Psoas muscle (tissue), 8 donors: ENCODE measurements at regions of chr6 and their contacts with region 1.

Region 1: DNA sequence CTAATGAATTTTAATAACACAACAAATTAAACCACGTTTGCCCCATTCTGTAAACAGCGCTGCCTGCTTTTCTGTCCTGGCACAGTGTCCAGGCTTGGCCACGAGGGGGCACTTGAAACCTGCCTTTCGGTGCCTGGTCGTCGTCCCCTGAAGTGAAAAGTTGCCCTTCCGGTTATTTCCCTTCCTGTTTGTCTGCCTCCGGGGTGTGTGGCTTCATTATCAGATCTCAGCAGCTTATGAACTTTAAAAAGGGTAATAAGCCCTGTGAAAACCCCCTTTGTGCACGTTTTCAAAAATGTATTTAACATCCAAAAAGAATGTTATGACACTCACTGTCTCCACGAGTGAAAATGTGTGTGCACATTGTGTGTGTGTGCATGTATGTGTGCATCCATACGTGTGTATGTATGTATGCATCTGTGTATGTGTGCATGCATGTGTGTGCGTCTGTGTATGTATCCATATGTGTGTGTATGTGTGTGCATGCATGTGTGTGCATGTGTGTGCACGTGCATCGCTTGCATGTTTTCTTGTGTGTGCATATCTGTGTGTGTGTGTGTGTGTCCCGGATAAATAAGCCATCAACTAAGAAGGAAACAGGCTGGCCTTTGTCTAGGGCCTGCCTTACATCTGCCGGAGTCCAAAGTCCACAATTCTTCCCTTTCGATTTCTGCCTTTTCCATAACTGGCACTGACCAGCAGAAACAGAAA is 358.4 kb downstream of the THBS2 start:
- DNase-seq: peak; percentile 77 to 87
- ATAC-seq: peak; percentile 82 to 94 (median 84)
- H3K4me3 ChIP-seq: peak overlapping the region; percentile 42
- H3K27ac ChIP-seq: no peak overlapping the region
- H3K4me1 ChIP-seq: no peaks in the 10 kb centered on the region
- H3K27me3 ChIP-seq: no peaks in the 10 kb centered on the region
- CTCF ChIP-seq: peak; percentile 94

Region 2: DNA sequence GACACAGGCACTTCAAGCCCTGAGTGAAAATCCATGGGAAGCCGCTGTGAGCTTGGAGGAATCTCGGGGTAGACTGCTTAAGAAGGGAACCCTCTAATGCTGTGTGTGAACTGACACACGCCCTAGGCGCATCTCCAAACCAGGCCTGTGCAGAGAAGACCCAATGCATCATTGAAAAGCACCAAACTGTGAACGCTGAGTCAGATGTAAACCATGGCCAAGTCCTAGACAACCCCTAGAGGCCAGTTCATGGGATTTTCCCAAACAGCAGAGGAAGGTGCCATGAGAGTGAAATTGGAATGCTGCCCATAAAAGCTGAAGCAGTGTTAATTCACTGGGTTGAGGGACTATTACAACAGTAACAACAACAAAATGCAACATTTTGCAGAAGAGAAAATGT is 157.8 kb before region 1 on chr6:
- intact Hi-C with region 1: no loop called
- DNase-seq: no peak
- ATAC-seq: no peak
- H3K4me3 ChIP-seq: no peak overlapping the region
- H3K27ac ChIP-seq: no peak overlapping the region
- H3K4me1 ChIP-seq: no peaks in the 10 kb centered on the region
- H3K27me3 ChIP-seq: peaks cover 0 to 4% (median 2%) of the 10 kb centered on the region in 3 donors
- CTCF ChIP-seq: no peak

Region 3: DNA sequence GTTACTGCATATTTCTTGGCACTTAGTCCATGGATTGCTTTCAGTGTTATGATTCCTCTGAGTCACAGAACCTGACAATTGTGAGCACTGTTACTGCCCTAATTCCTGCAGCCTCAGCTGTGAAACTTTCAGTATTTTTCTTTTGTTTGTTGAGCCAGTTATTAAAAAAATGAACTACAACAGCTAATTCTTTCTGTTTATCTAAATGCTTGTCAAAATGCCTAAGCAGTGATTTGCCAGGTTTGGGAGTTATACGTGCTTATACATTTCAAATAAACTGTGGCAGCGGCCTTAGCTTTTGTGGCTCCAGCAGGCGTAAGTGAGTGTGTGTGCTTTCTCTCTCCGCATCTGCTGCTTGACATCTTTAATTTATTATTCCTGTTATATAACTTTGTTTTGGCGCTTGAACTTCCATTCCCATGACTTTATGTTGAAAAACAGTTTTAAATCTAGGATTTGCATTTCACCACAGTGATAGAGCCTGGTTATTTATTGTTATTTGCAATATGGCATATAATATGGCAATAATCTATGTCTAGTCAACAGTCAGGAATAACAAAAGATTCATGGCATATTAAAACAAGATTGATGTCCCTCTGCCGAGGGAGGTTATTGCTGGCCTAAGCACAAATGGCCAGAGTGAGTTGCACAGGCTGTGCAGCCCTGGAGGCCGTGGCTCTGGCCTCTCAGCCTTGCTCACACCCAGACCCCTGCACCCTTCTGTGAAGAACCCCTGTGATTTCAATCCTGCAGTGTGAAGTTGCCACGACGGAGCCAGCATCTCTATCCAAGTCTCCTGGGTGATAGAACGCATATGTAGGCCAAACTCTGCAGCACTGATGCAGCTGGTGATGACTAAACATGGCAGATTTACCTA is 55.0 kb after region 1 on chr6:
- intact Hi-C with region 1: loop called in 1 of 2 experiments (anchors 5 kb)
- DNase-seq: no peak
- ATAC-seq: peak in 3 of 4 donors; percentile 22 to 42 (median 39)
- H3K4me3 ChIP-seq: no peak overlapping the region
- H3K27ac ChIP-seq: no peak overlapping the region
- H3K4me1 ChIP-seq: peaks cover 3% of the 10 kb centered on the region
- H3K27me3 ChIP-seq: peaks cover 0 to 16% (median 0%) of the 10 kb centered on the region in 3 donors
- CTCF ChIP-seq: no peak

Region 4: GRCh38 chr6:168979254-168979653 is 84.0 kb after region 1 on chr6:
- intact Hi-C with region 1: no loop called
- DNase-seq: no peak
- ATAC-seq: no peak
- H3K4me3 ChIP-seq: no peak overlapping the region
- H3K27ac ChIP-seq: no peak overlapping the region
- H3K4me1 ChIP-seq: peaks cover 4% of the 10 kb centered on the region
- H3K27me3 ChIP-seq: no peaks in the 10 kb centered on the region
- CTCF ChIP-seq: no peak

Region 5: GRCh38 chr6:169008644-169009257 is 113.5 kb after region 1 on chr6:
- intact Hi-C with region 1: no loop called
- DNase-seq: no peak
- ATAC-seq: no peak
- H3K4me3 ChIP-seq: no peak overlapping the region
- H3K27ac ChIP-seq: no peak overlapping the region
- H3K4me1 ChIP-seq: no peaks in the 10 kb centered on the region
- H3K27me3 ChIP-seq: no peaks in the 10 kb centered on the region
- CTCF ChIP-seq: no peak

Region 6: GRCh38 chr6:169409742-169410312 is 514.6 kb after region 1 on chr6:
- intact Hi-C with region 1: no loop called
- DNase-seq: no peak
- ATAC-seq: no peak
- H3K4me3 ChIP-seq: no peak overlapping the region
- H3K27ac ChIP-seq: no peak overlapping the region
- H3K4me1 ChIP-seq: no peaks in the 10 kb centered on the region
- H3K27me3 ChIP-seq: peaks cover 0 to 3% (median 0%) of the 10 kb centered on the region in 3 donors
- CTCF ChIP-seq: no peak